ENCODE measurements at regions of chr7 and their contacts with region 1.

Region 1: GRCh38 chr7:56009695-56010094 is 41.5 kb downstream of the PSPH start:
- DNase-seq: no peak
- ATAC-seq: no peak
- H3K4me3 ChIP-seq: no peak overlapping the region
- H3K4me3 Mint-ChIP-seq: no peak overlapping the region
- H3K27ac ChIP-seq: no peak overlapping the region
- H3K27ac Mint-ChIP-seq: no peak overlapping the region
- H3K4me1 ChIP-seq: no peaks in the 10 kb centered on the region
- H3K4me1 Mint-ChIP-seq: no peaks in the 10 kb centered on the region
- H3K27me3 ChIP-seq: no peaks in the 10 kb centered on the region
- H3K27me3 Mint-ChIP-seq: no peaks in the 10 kb centered on the region
- CTCF ChIP-seq: no peak

Region 2: DNA sequence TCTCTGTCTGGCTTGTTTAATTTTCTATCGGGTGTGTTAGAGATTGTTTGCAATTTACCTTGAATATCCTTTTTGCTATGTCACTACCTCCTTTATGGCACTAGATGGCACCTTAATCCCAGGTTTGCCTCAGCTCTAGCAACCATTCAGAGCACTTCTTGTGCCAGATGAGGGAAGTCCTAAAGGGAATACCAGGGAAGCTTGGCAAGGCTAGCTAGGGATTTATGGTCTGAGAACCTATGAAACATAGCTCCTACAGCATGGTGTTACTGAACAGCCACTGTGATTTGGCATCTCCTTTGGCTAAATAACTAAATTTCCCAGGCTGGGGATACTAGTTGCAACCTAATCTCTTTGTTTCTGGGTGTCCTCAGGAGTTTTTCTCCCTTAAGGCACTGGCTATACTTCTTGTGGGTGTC is 368.4 kb before region 1 on chr7:
- CTCF ChIA-PET with region 1: no interaction called
- POLR2A ChIA-PET with region 1: no interaction called
- intact Hi-C with region 1: loop called in 1 of 2 experiments (anchors 10 kb)
- DNase-seq: peak in 10 of 14 experiments; percentile 4 to 79 (median 14)
- ATAC-seq: peak; percentile 87
- H3K4me3 ChIP-seq: no peak overlapping the region
- H3K4me3 Mint-ChIP-seq: no peak overlapping the region
- H3K27ac ChIP-seq: no peak overlapping the region
- H3K27ac Mint-ChIP-seq: no peak overlapping the region
- H3K4me1 ChIP-seq: peaks cover 6% of the 10 kb centered on the region
- H3K4me1 Mint-ChIP-seq: peaks cover 6% of the 10 kb centered on the region
- H3K27me3 ChIP-seq: no peaks in the 10 kb centered on the region
- H3K27me3 Mint-ChIP-seq: no peaks in the 10 kb centered on the region
- CTCF ChIP-seq: peak; percentile 80

Region 3: DNA sequence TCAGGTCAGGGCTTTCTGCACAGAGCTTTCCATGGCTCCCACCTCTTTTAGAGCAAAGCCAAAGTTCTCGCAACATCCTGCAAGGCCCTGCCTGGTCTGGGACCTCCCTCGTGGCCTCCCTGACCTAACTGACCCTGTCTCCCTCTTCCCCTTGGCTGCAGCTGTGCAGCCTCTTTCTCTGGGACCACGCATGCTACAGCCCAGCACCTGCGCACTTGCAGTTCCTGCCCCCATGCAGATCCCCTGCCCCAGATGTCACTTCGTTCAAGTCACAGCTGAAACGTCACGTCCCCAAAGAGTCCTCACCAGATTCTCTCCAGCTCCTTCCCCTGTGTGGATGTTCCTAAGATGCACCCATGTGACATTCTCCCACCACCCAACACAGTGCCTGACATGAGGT is 1379.1 kb after region 1 on chr7:
- CTCF ChIA-PET with region 1: no interaction called
- POLR2A ChIA-PET with region 1: no interaction called
- intact Hi-C with region 1: no loop called
- DNase-seq: no peak
- ATAC-seq: no peak
- H3K4me3 ChIP-seq: no peak overlapping the region
- H3K4me3 Mint-ChIP-seq: no peak overlapping the region
- H3K27ac ChIP-seq: no peak overlapping the region
- H3K27ac Mint-ChIP-seq: no peak overlapping the region
- H3K4me1 ChIP-seq: no peaks in the 10 kb centered on the region
- H3K4me1 Mint-ChIP-seq: no peaks in the 10 kb centered on the region
- H3K27me3 ChIP-seq: no peaks in the 10 kb centered on the region
- H3K27me3 Mint-ChIP-seq: no peaks in the 10 kb centered on the region
- CTCF ChIP-seq: no peak

Measured in CD4-positive, alpha-beta T cell (primary cell).